Panc1 (cell line): ENCODE measurements at regions of chr12 and their contacts with region 1.

Region 1: GRCh38 chr12:17841496-17841895 is 248.5 kb downstream of the RERGL start:
- DNase-seq: no peak
- ATAC-seq: no peak
- H3K4me3 ChIP-seq: no peak overlapping the region
- H3K27ac ChIP-seq: no peak overlapping the region
- H3K4me1 ChIP-seq: no peaks in the 10 kb centered on the region
- H3K27me3 ChIP-seq: no peaks in the 10 kb centered on the region
- CTCF ChIP-seq: no peak

Region 2: GRCh38 chr12:17593715-17594409 is 247.6 kb before region 1 on chr12:
- CTCF ChIA-PET with region 1: no interaction called
- POLR2A ChIA-PET with region 1: no interaction called
- in situ Hi-C with region 1: no loop called
- intact Hi-C with region 1: no loop called
- DNase-seq: no peak
- ATAC-seq: no peak
- H3K4me3 ChIP-seq: no peak overlapping the region
- H3K27ac ChIP-seq: no peak overlapping the region
- H3K4me1 ChIP-seq: no peaks in the 10 kb centered on the region
- H3K27me3 ChIP-seq: no peaks in the 10 kb centered on the region
- CTCF ChIP-seq: no peak

Region 3: GRCh38 chr12:17763366-17763765 is 78.1 kb before region 1 on chr12:
- CTCF ChIA-PET with region 1: no interaction called
- POLR2A ChIA-PET with region 1: no interaction called
- in situ Hi-C with region 1: no loop called
- intact Hi-C with region 1: loop called (anchors 5 kb)
- DNase-seq: no peak
- ATAC-seq: no peak
- H3K4me3 ChIP-seq: no peak overlapping the region
- H3K27ac ChIP-seq: no peak overlapping the region
- H3K4me1 ChIP-seq: no peaks in the 10 kb centered on the region
- H3K27me3 ChIP-seq: no peaks in the 10 kb centered on the region
- CTCF ChIP-seq: no peak

Region 4: GRCh38 chr12:17829813-17830212 is 11.7 kb before region 1 on chr12:
- CTCF ChIA-PET with region 1: no interaction called
- POLR2A ChIA-PET with region 1: no interaction called
- in situ Hi-C with region 1: no loop called
- intact Hi-C with region 1: no loop called
- DNase-seq: no peak
- ATAC-seq: no peak
- H3K4me3 ChIP-seq: no peak overlapping the region
- H3K27ac ChIP-seq: no peak overlapping the region
- H3K4me1 ChIP-seq: no peaks in the 10 kb centered on the region
- H3K27me3 ChIP-seq: no peaks in the 10 kb centered on the region
- CTCF ChIP-seq: no peak

Region 5: DNA sequence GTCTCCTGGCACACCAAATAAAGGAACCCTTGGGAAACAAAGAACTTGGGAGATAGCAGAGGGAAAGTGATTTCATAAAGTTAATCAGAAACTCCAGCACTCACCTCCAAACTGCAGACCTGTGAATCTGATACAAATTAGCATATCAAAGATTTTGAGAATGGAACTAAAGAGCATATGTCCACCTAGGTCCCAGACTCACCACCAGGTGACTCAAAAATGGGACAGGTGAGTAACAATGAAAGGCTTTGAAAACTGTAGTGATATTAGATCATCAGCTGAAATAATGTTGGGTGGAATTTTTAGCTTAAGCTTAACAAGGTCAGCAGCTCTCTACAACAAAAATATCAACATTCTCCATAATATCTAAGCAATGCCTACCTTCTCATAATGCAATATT is 33.7 kb after region 1 on chr12:
- CTCF ChIA-PET with region 1: no interaction called
- POLR2A ChIA-PET with region 1: no interaction called
- in situ Hi-C with region 1: no loop called
- intact Hi-C with region 1: no loop called
- DNase-seq: no peak
- ATAC-seq: no peak
- H3K4me3 ChIP-seq: no peak overlapping the region
- H3K27ac ChIP-seq: no peak overlapping the region
- H3K4me1 ChIP-seq: no peaks in the 10 kb centered on the region
- H3K27me3 ChIP-seq: no peaks in the 10 kb centered on the region
- CTCF ChIP-seq: no peak

Region 6: DNA sequence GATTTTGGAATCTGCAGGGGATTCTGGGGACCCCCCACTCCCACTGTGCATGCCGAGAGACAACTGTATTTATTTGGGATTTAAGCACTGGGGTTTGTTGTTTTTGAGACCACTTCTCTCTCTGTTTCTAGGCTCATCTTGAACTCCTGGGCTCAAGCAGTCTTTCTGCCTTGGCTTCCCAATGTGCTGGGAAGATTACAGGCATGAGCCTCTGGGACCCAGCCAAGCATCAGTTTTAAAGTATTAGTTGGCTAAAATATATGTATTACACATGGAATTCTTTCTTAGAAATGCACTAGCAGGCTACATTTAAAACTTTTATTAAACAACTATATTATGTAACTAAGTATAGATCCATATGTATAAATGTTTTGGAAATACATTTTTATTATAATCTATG is 1676.1 kb after region 1 on chr12:
- CTCF ChIA-PET with region 1: no interaction called
- POLR2A ChIA-PET with region 1: no interaction called
- in situ Hi-C with region 1: no loop called
- intact Hi-C with region 1: no loop called
- DNase-seq: no peak
- ATAC-seq: no peak
- H3K4me3 ChIP-seq: no peak overlapping the region
- H3K27ac ChIP-seq: no peak overlapping the region
- H3K4me1 ChIP-seq: no peaks in the 10 kb centered on the region
- H3K27me3 ChIP-seq: no peaks in the 10 kb centered on the region
- CTCF ChIP-seq: no peak